ENCODE measurements at regions of chr4 and their contacts with region 1.

Region 1: DNA sequence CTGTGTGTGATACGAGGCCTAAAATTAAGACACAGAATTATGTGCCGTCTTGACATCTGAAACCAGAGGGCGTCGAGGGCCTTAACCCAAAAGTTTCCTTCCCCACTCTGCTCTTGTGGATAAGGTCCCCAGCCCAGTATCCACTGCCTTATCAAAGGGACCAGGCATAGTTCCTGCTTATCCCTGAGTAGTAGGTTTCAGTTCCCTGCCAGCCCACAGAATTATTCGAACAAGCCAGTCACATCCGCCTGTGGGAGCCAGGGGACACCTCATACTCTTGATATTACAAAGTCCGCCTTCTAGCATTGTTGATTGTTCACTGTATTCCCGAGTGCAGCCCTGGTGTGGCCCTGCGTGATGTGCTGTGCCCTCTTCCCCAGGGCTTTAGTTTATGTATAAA is 5.4 kb upstream of the MMRN1 start:
- DNase-seq: no peak
- H3K4me3 ChIP-seq: no peak overlapping the region
- H3K27ac ChIP-seq: no peak overlapping the region
- H3K4me1 ChIP-seq: no peaks in the 10 kb centered on the region
- H3K27me3 ChIP-seq: peaks cover 37% of the 10 kb centered on the region

Region 2: DNA sequence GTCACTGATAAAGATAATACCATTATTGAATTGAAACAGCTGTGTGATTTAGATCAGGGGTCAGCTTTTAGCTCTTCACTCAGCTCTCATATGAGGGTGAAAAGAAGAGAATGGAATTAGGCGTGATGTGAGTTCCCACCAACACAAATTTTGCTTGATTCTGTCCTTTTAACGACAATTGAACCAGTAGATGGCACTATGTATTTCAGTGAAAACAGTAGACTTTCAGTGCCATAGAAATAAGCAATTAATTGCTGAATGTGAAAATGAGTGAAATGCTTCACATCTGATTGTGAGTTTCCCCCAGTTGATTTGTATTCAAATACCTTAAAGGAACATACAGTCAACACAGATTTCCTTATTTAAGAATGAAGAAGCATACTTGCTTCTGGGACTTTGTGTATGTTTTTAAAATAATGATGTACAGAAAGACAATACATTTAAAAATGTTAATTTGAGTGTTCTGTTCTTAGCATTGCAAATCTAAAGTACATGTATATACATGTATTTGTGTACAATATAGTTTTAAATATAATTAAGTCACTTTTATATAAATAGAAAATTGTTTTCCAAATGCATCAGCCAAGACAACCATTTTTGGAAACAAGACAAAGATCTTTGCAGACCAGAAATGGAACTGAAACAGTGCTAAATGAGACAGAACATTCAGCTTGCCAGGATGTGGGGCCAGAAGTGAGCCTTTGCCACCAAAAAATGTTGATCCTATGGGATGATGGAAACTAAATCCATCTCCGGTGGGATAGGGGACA is 231.2 kb before region 1 on chr4:
- in situ Hi-C with region 1: loop called (anchors 10 kb)
- DNase-seq: peak; percentile 57
- H3K4me3 ChIP-seq: no peak overlapping the region
- H3K27ac ChIP-seq: no peak overlapping the region
- H3K4me1 ChIP-seq: peaks cover 13% of the 10 kb centered on the region; the same call in 1 of the 2 replicates
- H3K27me3 ChIP-seq: no peaks in the 10 kb centered on the region